HepG2 (cell line): ENCODE measurements at regions of chr19 and their contacts with region 1.

Region 1: GRCh38 chr19:36041831-36042230 is 9.2 kb upstream of the CLIP3 start:
- DNase-seq: peak; percentile 87
- ATAC-seq: peak; percentile 94
- H3K4me3 ChIP-seq: no peak overlapping the region
- H3K27ac ChIP-seq: peak overlapping the region; percentile 36
- H3K4me1 ChIP-seq: peaks cover 24% of the 10 kb centered on the region
- H3K27me3 ChIP-seq: no peaks in the 10 kb centered on the region
- CTCF ChIP-seq: no peak
- EP300 ChIP-seq: peak in 1 of 2 experiments; percentile 34; a peak in 1 of 4 replicates
- POLR2A ChIP-seq: no peak
- RAD21 ChIP-seq: no peak

Region 2: DNA sequence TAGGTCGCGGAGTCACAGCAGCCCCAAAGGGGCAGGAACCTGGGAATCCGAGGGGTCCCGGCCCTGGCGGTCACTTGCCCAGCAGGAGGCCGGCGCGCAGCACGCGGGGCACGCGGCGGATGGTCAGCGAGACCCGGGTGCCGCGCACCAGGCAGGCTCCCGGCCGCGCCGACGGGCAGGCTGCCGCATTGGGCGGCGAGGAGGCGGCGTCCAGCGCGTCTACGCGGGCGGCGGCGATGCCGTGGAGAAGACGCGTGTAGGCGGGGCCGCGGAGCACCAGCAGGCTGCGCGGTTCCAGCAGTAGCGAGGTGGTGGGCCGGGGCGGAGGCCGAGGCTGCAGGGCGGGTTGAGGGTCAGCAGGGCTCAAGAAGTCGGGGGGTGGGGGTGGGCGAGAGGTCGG is 32.6 kb before region 1 on chr19:
- CTCF ChIA-PET with region 1: no interaction called
- POLR2A ChIA-PET with region 1: interaction called, 6 read pairs
- in situ Hi-C with region 1: no loop called
- intact Hi-C with region 1: loop called (anchors 2 kb)
- DNase-seq: no peak
- ATAC-seq: no peak
- H3K4me3 ChIP-seq: peak overlapping the region in 1 of 3 experiments; percentile 93; a peak in 2 of 6 replicates
- H3K27ac ChIP-seq: peak overlapping the region; percentile 35
- H3K4me1 ChIP-seq: peaks cover 46% of the 10 kb centered on the region
- H3K27me3 ChIP-seq: no peaks in the 10 kb centered on the region; a peak in 1 of 5 replicates
- CTCF ChIP-seq: no peak
- EP300 ChIP-seq: no peak
- POLR2A ChIP-seq: no peak
- RAD21 ChIP-seq: no peak